Ascending aorta (tissue), 2 donors: ENCODE measurements at regions of chr14 and their contacts with region 1.

Region 1: GRCh38 chr14:69260861-69261564 is 1.1 kb downstream of the GALNT16 start:
- DNase-seq: peak in 1 of 2 donors; percentile 70
- H3K4me3 ChIP-seq: peak overlapping the region; percentile 76 to 78
- H3K27ac ChIP-seq: peak overlapping the region; percentile 43 to 74
- H3K4me1 ChIP-seq: peaks cover 4 to 37% of the 10 kb centered on the region in 2 donors
- H3K27me3 ChIP-seq: no peaks in the 10 kb centered on the region
- CTCF ChIP-seq: peak; percentile 54 to 83 (median 62)

Region 2: GRCh38 chr14:69242311-69243224 is 18.4 kb before region 1 on chr14:
- intact Hi-C with region 1: loop called (anchors 2 kb)
- DNase-seq: peak in 1 of 2 donors; percentile 85
- H3K4me3 ChIP-seq: peak overlapping the region in 1 of 2 donors; percentile 50
- H3K27ac ChIP-seq: peak overlapping the region; percentile 15 to 66
- H3K4me1 ChIP-seq: no peaks in the 10 kb centered on the region
- H3K27me3 ChIP-seq: no peaks in the 10 kb centered on the region
- CTCF ChIP-seq: peak; percentile 84 to 88 (median 86)

Region 3: DNA sequence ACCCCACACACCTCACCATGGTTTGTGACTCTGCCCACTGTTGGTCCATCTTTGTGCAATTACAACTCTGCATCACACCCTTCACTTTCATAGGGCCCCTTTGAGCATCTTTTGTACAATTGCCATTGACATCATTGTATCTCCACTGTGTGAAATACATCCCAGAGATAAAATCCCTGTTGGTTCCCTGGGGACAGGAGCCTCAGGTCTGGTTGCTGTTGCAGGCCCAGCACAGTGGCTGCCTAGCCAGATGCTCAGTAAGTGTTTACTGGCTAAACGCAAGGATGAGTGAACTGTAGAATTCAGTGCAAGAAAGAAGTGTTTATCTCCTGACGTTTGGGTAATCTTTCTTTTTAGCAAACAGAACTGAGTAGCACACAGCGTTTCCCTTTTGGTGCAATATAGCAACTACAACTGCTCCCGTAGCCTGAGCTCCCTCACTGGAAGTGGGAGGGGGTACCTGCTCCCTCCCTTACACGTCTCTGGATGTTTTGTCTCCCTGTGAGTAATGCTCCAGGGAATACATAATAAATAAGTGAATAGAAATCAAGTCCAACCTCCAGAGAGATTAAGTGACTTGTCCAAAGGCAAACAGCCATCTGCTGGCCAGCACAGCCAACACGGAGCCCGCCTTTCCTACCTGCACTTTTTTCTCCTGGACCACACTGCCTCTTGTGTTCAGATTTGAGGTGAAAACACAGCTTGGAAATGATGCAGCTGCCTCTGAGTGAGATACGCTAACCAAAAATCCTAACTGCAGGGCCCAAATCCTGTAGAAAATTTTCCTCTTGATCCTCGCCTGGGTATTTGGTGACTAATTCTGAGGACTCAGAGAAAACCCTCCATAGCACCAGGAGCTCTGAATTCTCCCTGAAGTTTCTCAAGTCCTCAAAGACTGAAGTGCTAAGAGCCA is 26.3 kb after region 1 on chr14:
- intact Hi-C with region 1: loop called (anchors 1 kb)
- DNase-seq: no peak
- H3K4me3 ChIP-seq: no peak overlapping the region
- H3K27ac ChIP-seq: peak overlapping the region; percentile 61 to 63
- H3K4me1 ChIP-seq: peaks cover 6 to 11% of the 10 kb centered on the region in 2 donors
- H3K27me3 ChIP-seq: no peaks in the 10 kb centered on the region
- CTCF ChIP-seq: peak in 1 of 3 experiments; percentile 4

Region 4: DNA sequence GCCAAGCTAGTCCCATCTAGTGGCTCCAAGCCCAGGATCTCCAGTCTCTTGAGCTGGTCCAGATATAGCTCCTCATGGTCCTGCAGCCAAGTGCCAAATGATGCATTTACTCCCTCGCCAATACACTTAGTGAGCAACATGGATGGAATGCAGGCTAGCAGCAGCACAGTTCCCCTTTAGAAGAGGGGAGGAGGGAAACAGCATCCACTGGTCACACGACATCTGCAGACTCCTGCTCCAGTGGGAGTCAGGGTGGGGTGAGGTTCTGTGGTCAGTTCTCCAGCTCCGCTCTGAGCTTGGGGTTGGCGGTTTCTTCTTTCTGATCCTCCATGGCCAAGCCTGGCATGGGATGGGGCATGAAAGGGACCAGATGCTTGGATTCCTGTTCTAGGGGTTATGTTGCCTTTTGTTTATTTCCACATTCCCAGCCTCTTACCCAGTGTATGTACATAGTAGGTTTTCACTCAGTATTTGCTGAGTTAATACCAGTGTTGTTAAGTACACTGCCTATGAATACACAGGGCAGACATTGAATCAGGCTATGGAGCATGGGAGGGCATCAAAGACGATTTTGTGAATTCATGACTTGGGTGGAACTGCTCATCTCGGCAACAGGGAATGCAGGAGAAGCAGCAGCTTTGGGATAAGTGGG is 56.2 kb after region 1 on chr14:
- intact Hi-C with region 1: loop called (anchors 1 kb)
- DNase-seq: peak; percentile 25 to 87
- H3K4me3 ChIP-seq: no peak overlapping the region
- H3K27ac ChIP-seq: peak overlapping the region; percentile 28 to 63
- H3K4me1 ChIP-seq: peaks cover 0 to 7% of the 10 kb centered on the region in 2 donors
- H3K27me3 ChIP-seq: no peaks in the 10 kb centered on the region
- CTCF ChIP-seq: no peak

Region 5: DNA sequence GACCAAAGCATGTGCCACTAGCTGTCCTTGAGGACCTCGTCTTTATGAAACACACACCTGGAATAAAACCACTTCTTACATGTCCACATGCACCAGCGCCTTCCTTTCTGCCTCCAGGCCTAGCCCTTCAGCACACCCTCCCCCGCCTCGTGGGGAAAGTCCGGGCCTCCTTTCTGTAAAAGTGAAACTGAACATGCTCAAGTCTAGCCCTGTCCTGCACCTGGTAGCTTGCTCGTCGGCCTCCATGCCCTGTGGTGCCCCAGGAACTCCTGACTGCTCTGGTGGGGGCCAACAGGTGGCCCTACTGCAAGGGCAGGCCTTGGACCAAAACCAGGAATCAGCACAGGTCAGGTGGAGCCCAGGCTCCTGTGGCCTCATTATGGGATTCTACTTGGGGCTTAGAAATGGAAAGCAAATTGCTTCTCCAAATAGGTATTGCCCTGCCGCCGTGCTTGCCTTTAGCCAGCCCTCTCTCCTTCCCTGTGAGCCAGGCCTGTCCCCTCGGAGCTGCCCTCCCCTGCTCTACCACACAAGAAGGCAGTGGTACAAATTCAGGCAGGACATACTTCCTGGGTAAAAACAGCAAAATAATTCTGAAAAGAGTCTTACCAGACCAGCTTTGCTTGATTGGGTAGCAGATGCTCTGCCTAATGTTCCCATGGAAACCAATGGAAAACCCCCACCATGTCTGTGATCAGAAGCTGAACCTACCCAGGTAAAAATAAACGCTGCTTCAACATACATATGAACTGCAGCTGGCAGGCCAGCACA is 93.6 kb after region 1 on chr14:
- intact Hi-C with region 1: loop called (anchors 1 kb)
- DNase-seq: no peak
- H3K4me3 ChIP-seq: no peak overlapping the region
- H3K27ac ChIP-seq: peak overlapping the region; percentile 85 to 88
- H3K4me1 ChIP-seq: peaks cover 2 to 19% of the 10 kb centered on the region in 2 donors
- H3K27me3 ChIP-seq: no peaks in the 10 kb centered on the region
- CTCF ChIP-seq: no peak

Region 6: GRCh38 chr14:69398053-69398817 is 137.2 kb after region 1 on chr14 and contains the starts of genes ERH and SLC39A9:
- intact Hi-C with region 1: loop called (anchors 2 kb)
- DNase-seq: peak; percentile 85 to 98
- H3K4me3 ChIP-seq: peak within 1 kb of the TSS; percentile 82 to 95
- H3K27ac ChIP-seq: peak within 1 kb of the TSS; percentile 87 to 92
- H3K4me1 ChIP-seq: peaks cover 8 to 34% of the 10 kb centered on the region in 2 donors
- H3K27me3 ChIP-seq: no peaks in the 10 kb centered on the region
- CTCF ChIP-seq: no peak
- total RNA-seq, gene ERH: 31.1 TPM
- total RNA-seq, gene SLC39A9: 26.2 TPM

Region 7: GRCh38 chr14:69451956-69452355 is 190.9 kb after region 1 on chr14:
- intact Hi-C with region 1: no loop called
- DNase-seq: no peak
- H3K4me3 ChIP-seq: no peak overlapping the region
- H3K27ac ChIP-seq: no peak overlapping the region
- H3K4me1 ChIP-seq: no peaks in the 10 kb centered on the region
- H3K27me3 ChIP-seq: no peaks in the 10 kb centered on the region
- CTCF ChIP-seq: no peak